ENCODE measurements at regions of chr5 and their contacts with region 1.

Region 1: DNA sequence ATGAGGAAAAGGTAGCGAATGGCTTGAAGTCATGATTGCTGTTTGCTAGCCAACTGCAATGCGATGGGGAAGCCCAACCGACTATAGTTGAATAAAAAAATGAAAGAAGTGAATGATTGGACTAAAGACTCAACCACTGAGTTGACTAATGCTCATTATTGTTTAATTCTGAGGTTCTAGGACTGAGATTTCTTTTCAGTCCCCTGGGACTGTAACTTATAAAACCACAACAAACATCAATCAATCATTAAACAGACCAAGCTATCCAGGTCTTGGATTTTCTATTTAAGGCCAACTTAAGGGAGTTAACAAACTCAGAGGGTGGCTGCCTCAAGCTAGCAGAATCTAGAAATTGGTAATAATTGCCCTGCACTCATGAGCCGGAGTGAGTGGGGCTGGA is 154.2 kb downstream of the DOCK2 start:
- DNase-seq: no peak
- CTCF ChIP-seq: no peak

Region 2: DNA sequence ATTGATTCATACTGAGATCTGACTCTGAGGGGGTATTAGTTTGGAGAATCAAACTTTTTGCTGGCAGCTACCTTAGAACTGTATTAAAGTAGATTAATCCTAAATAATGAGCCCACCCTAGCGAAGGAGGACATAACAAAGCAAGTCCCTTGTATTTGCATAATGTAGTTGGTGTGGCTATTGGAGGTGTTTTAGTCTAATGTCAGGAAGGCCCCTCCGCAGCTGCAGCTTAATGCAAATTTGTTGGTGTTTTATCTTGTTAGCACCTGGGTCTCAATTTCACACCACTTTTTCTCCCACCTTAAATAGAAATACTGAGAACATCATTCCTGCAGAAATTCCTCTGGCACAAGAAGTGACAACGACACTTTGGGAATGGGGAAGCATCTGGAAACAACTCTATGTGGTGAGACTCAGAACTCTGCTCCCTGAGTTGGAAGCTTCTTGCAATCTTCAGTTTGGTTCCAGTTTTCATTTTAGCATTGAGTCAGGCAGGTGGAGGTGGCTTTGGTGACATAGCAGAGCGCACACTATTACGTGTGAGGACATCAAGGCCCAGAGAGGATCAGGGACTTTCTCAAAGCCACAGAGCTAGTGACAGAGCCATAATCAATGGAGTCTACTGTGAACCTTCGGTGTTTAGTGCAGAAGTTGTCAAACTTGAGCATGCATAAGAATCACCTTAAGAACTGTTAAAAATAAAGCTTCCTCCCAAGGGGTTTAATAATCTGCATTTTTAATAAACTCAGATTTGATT is 120.3 kb before region 1 on chr5:
- CTCF ChIA-PET with region 1: no interaction called
- POLR2A ChIA-PET with region 1: no interaction called
- DNase-seq: peak; percentile 70
- CTCF ChIP-seq: no peak

Region 3: DNA sequence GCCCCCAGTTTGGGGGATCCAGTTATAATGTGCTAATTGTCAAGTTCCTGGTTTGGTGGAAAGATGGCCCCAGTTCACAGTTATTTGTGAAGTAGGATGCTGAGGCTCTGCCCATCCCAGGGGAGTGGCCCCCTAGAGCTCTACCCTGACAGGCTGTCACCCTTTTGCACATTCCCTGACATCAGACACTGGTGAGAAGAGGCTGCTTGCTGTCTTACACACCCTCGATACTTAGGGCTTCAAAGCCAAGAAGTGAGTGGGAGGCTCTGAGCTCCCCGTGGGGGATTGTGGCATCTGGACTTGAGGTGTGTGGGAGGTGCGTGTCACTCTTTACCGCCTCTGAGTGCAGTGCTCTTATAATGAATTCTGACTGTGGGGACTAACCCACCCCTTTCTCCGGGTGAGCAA is 14.3 kb after region 1 on chr5:
- CTCF ChIA-PET with region 1: interaction called, 11 read pairs
- POLR2A ChIA-PET with region 1: interaction called, 3 read pairs
- DNase-seq: peak; percentile 79
- CTCF ChIP-seq: no peak

Measured in GM10248 (cell line).